HCT116 (cell line): ENCODE measurements at regions of chrX and their contacts with region 1.

Region 1: DNA sequence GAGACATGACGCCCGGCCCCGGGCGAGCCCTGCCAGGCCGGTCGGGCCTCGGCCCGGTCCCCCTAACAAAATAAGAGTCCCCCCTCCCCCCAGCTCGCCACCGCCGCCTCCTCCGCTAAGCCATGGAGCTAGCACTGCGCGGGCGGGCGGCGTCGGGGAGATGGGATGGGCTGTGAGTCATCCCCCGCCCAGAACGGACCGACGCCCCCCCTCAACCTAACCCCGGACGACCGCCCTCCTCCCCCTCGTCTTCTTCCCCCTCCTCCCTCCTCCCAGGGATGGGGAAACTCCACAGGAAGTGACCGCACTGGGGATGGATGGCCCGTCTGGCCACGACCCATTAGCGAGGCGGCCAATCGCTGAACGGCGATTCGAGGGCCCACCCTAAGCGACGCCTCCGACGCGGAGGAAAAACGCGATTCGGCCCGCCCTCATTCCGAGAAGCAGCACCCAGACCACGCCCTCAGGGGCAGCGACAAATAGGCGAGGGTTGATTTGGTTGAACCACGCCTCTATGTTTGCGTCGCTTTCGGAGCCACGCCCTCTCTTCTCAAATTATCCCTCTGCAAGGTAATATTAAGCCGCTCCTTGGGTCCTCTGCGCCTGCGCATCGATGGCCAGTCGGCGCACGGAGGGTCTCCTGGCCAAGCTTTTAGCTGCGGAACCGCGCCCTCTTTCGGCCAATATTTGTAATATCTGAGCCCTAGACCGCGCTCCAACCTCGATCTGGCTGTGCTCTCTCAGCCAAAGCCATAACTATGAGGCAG is at the start of gene TFE3:
- DNase-seq: peak; percentile 95
- ATAC-seq: peak; percentile 88
- H3K4me3 ChIP-seq: peak within 1 kb of the TSS; percentile 69
- H3K27ac ChIP-seq: peak within 1 kb of the TSS; percentile 94
- H3K4me1 ChIP-seq: peaks cover 23 to 34% of the 10 kb centered on the region in 2 experiments
- H3K27me3 ChIP-seq: no peaks in the 10 kb centered on the region
- CTCF ChIP-seq: peak in 2 of 3 experiments; percentile 51 to 55; a peak in 3 of 6 replicates
- POLR2A ChIP-seq: no peak
- RAD21 ChIP-seq: no peak
- total RNA-seq, gene TFE3: 17.1 TPM

Region 2: GRCh38 chrX:48957827-48958634 is 85.4 kb before region 1 on chrX:
- CTCF ChIA-PET with region 1: no interaction called
- POLR2A ChIA-PET with region 1: interaction called, 3 read pairs
- RAD21 ChIA-PET with region 1: no interaction called
- intact Hi-C with region 1: loop called (anchors 2 kb)
- DNase-seq: peak; percentile 93
- ATAC-seq: peak; percentile 92
- H3K4me3 ChIP-seq: peak overlapping the region; percentile 76 to 77
- H3K27ac ChIP-seq: peak overlapping the region; percentile 93
- H3K4me1 ChIP-seq: peaks cover 11 to 18% of the 10 kb centered on the region in 2 experiments
- H3K27me3 ChIP-seq: no peaks in the 10 kb centered on the region
- CTCF ChIP-seq: no peak
- POLR2A ChIP-seq: no peak
- RAD21 ChIP-seq: no peak

Region 3: GRCh38 chrX:49002091-49002935 is 41.1 kb before region 1 on chrX and contains the start of gene GRIPAP1:
- CTCF ChIA-PET with region 1: no interaction called
- POLR2A ChIA-PET with region 1: interaction called, 4 read pairs
- RAD21 ChIA-PET with region 1: no interaction called
- intact Hi-C with region 1: loop called (anchors 5 kb)
- DNase-seq: peak; percentile 83
- ATAC-seq: peak; percentile 83
- H3K4me3 ChIP-seq: peak within 1 kb of the TSS; percentile 78 to 86
- H3K27ac ChIP-seq: peak within 1 kb of the TSS; percentile 81
- H3K4me1 ChIP-seq: peaks cover 0 to 10% of the 10 kb centered on the region in 2 experiments; a peak in 1 of 4 replicates
- H3K27me3 ChIP-seq: no peaks in the 10 kb centered on the region
- CTCF ChIP-seq: no peak
- POLR2A ChIP-seq: no peak
- RAD21 ChIP-seq: no peak
- total RNA-seq, gene GRIPAP1: 39.4 TPM

Region 4: GRCh38 chrX:49163555-49164419 is 120.4 kb after region 1 on chrX:
- CTCF ChIA-PET with region 1: no interaction called
- POLR2A ChIA-PET with region 1: no interaction called
- RAD21 ChIA-PET with region 1: no interaction called
- intact Hi-C with region 1: loop called (anchors 10 kb)
- DNase-seq: peak; percentile 63
- ATAC-seq: peak; percentile 75
- H3K4me3 ChIP-seq: peak overlapping the region; percentile 32 to 45
- H3K27ac ChIP-seq: peak overlapping the region; percentile 95
- H3K4me1 ChIP-seq: peaks cover 14 to 57% of the 10 kb centered on the region in 2 experiments
- H3K27me3 ChIP-seq: no peaks in the 10 kb centered on the region
- CTCF ChIP-seq: peak in 2 of 3 experiments; percentile 54 to 55; a peak in 4 of 6 replicates
- POLR2A ChIP-seq: peak; percentile 23
- RAD21 ChIP-seq: no peak